Kidney (tissue), 22 donors: ENCODE measurements at regions of chr12 and their contacts with region 1.

Region 1: GRCh38 chr12:49967042-49967776 is 5.5 kb downstream of the AQP5 start:
- DNase-seq: peak; percentile 91 to 96 (median 93)
- H3K4me3 ChIP-seq: peak overlapping the region in 2 of 3 donors; percentile 51 to 52
- H3K27ac ChIP-seq: no peak overlapping the region
- H3K4me1 ChIP-seq: peaks cover 0 to 12% (median 8%) of the 10 kb centered on the region in 3 donors
- H3K27me3 ChIP-seq: no peaks in the 10 kb centered on the region
- CTCF ChIP-seq: peak; percentile 99

Region 2: GRCh38 chr12:49872781-49873181 is 94.4 kb before region 1 on chr12:
- intact Hi-C with region 1: no loop called
- DNase-seq: peak in 1 of 5 donors; percentile 38
- H3K4me3 ChIP-seq: no peak overlapping the region
- H3K27ac ChIP-seq: no peak overlapping the region
- H3K4me1 ChIP-seq: peaks cover 2 to 28% (median 26%) of the 10 kb centered on the region in 3 donors
- H3K27me3 ChIP-seq: no peaks in the 10 kb centered on the region
- CTCF ChIP-seq: no peak

Region 3: DNA sequence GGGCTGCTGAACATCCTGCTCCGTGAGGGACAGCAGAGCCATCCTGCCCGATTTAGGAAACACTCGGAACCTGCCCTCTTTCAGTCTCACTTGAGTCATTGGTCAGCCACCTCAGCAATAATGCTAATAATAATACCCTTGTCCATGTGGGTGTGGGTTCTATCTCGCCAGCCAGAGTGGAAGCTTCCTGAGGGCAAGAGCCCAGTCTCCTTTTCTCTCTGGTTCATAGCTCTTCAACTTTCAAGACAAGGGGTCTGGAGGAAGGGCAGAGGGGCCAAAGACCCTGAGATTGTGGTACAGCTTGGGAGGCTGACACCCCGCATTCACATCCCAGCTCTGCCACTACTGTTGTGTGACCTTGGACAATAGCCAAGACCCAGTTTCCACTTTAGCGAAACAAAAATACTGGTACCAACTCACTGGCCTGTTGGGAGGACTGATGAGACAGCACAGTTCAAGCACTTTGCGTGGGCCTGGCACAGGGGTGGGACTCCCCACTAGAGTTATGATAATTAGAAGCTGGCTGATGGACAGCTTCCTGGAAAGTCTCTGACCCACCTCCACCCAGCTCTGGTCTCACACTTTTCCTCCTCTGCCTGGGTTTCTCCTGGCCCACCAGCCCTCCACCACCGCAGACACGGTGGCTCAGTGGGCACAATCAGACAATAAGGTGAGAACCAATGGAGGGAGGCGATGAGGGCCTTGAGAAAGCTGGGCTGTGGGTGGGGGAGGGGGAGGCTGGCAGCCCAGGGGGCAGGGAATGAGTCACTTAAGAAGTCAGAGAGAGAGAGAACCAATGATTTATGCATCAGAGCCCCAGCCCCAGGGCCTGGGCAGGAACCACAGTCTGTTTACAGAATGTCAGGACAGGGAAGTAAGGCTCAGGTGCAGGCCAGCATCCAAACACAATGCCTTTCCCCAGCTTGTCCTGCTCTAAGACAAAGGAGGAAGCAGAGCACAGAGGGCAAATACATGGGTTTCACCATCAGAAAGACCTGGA is 73.2 kb before region 1 on chr12:
- intact Hi-C with region 1: no loop called
- DNase-seq: peak; percentile 57 to 85 (median 66)
- H3K4me3 ChIP-seq: no peak overlapping the region
- H3K27ac ChIP-seq: peak overlapping the region in 1 of 2 donors; percentile 36
- H3K4me1 ChIP-seq: peaks cover 0 to 5% (median 2%) of the 10 kb centered on the region in 3 donors
- H3K27me3 ChIP-seq: no peaks in the 10 kb centered on the region
- CTCF ChIP-seq: no peak

Region 4: GRCh38 chr12:50050410-50051098 is 83.3 kb after region 1 on chr12:
- intact Hi-C with region 1: loop called (anchors 5 kb)
- DNase-seq: peak; percentile 40 to 90 (median 69)
- H3K4me3 ChIP-seq: peak overlapping the region in 1 of 3 donors; percentile 17
- H3K27ac ChIP-seq: no peak overlapping the region
- H3K4me1 ChIP-seq: peaks cover 0 to 2% (median 0%) of the 10 kb centered on the region in 3 donors
- H3K27me3 ChIP-seq: no peaks in the 10 kb centered on the region
- CTCF ChIP-seq: no peak